Naive thymus-derived CD4-positive, alpha-beta T cell (primary cell): ENCODE measurements at regions of chr19 and their contacts with region 1.

Region 1: DNA sequence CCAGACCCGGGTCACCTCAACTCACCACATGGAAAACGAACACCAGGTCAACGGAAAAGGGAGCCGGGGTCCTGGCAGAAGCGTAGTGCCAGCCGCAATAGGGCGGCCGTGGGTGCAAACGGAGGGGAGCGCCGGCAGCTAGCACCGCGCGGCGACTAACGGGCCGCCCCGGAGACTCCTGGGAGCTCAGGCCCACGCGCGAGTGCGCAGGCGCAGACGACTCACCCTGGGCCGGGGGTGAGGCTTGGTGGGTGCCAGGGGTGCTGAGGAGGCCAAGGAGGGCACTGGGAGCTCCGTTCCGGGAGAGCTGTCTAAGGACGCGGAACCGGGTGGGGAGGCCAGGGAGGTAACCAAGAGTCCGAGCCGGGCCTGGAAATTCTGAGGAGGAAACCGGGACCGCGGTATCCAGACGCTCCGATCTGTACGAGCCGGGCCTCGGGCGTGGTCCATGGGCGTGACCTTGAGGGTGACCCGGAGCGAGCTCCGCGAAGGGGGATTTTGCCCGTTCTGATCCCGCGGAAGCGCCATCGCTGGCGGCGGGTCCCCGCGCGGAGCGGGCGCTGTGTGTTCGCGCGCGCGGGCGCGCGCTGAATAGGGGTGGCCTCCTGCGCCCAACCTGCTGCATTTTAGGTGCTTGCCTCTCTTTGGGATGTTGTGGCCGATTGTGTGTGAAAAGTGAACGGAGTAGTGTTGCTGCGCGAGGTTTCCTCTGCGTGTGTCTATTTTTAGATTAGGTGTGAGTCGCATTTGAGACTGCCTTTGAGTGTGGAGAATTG is at the start of gene ZNF382:
- DNase-seq: peak; percentile 77 to 92 (median 86)
- ATAC-seq: peak; percentile 80
- H3K4me3 ChIP-seq: peak within 1 kb of the TSS; percentile 95
- H3K4me3 Mint-ChIP-seq: peak within 1 kb of the TSS; percentile 81 to 99 (median 93)
- H3K27ac ChIP-seq: peak within 1 kb of the TSS; percentile 84
- H3K27ac Mint-ChIP-seq: peak within 1 kb of the TSS; percentile 78 to 98 (median 93)
- H3K4me1 ChIP-seq: peaks cover 7 to 15% of the 10 kb centered on the region in 2 donors
- H3K4me1 Mint-ChIP-seq: peaks cover 20 to 32% (median 27%) of the 10 kb centered on the region in 7 donors
- H3K27me3 ChIP-seq: no peaks in the 10 kb centered on the region
- H3K27me3 Mint-ChIP-seq: no peaks in the 10 kb centered on the region
- total RNA-seq, gene ZNF382: 5.4 to 20.2 (median 12.2) TPM

Region 2: GRCh38 chr19:34999498-35000341 is 1605.6 kb before region 1 on chr19 and contains the start of gene GRAMD1A:
- CTCF ChIA-PET with region 1: no interaction called
- POLR2A ChIA-PET with region 1: no interaction called
- intact Hi-C with region 1: no loop called
- DNase-seq: peak; percentile 48 to 86 (median 63)
- ATAC-seq: peak; percentile 74
- H3K4me3 ChIP-seq: peak within 1 kb of the TSS; percentile 72
- H3K4me3 Mint-ChIP-seq: peak within 1 kb of the TSS; percentile 94 to 100 (median 98)
- H3K27ac ChIP-seq: peak within 1 kb of the TSS; percentile 97
- H3K27ac Mint-ChIP-seq: peak within 1 kb of the TSS; percentile 95 to 100 (median 98)
- H3K4me1 ChIP-seq: peaks cover 66 to 72% of the 10 kb centered on the region in 2 donors
- H3K4me1 Mint-ChIP-seq: peaks cover 58 to 81% (median 73%) of the 10 kb centered on the region in 7 donors
- H3K27me3 ChIP-seq: no peaks in the 10 kb centered on the region
- H3K27me3 Mint-ChIP-seq: no peaks in the 10 kb centered on the region
- total RNA-seq, gene GRAMD1A: 90.1 to 286 (median 253) TPM

Region 3: DNA sequence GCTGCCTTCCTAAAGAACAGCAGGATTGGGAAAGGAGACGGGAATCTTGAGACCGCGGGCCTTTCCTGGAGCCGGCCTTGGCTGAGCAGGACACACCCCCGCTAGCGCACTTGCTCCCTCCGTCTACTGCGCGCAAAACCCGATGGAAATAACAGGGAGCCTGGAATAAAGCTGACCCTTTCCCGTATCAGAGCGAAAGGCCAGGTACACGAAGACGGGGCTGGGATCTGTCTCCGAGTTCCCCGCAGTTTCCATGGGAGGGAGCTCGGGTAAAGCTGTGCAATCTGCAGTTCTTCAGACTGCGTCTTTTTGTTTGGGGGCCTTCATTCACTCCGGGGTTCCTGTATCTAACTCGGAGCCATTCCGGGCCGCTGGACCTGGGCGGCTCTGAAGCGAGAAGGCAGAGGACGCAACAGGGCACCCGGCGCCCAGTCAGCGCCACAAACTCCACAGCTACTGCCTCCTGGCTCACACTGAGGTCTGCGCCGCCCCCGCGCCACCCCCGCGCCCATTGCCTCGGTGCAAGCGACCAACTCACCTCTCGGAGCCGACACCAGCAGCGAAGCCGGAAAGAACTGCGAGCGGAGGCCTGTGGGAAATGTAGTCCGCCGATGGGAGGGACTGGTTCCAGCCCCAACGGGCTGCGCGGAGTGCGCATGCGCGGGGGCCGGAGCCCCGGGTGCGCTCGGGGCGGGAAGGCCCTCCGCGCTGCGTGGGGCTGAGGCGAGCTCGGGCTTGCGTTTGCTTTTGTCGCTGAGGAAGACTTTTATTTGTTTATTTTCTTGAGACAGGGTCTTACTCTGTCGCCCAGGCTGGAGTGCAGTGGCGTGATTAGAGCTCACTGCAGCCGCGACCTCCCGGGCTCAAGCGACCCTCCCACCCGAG is 226.4 kb before region 1 on chr19 and contains the start of gene ZFP14:
- CTCF ChIA-PET with region 1: interaction called, 3 read pairs
- POLR2A ChIA-PET with region 1: no interaction called
- intact Hi-C with region 1: loop called in 1 of 2 experiments (anchors 1 kb)
- DNase-seq: peak; percentile 86 to 95 (median 93)
- ATAC-seq: peak; percentile 99
- H3K4me3 ChIP-seq: peak within 1 kb of the TSS; percentile 86
- H3K4me3 Mint-ChIP-seq: peak within 1 kb of the TSS; percentile 82 to 98 (median 94)
- H3K27ac ChIP-seq: peak within 1 kb of the TSS; percentile 86
- H3K27ac Mint-ChIP-seq: peak within 1 kb of the TSS; percentile 55 to 98 (median 94)
- H3K4me1 ChIP-seq: peaks cover 0 to 10% of the 10 kb centered on the region in 2 donors
- H3K4me1 Mint-ChIP-seq: peaks cover 9 to 23% (median 21%) of the 10 kb centered on the region in 7 donors
- H3K27me3 ChIP-seq: no peaks in the 10 kb centered on the region
- H3K27me3 Mint-ChIP-seq: no peaks in the 10 kb centered on the region
- total RNA-seq, gene ZFP14: 5.3 to 24.0 (median 9.2) TPM

Region 4: GRCh38 chr19:36449059-36449670 is 156.1 kb before region 1 on chr19:
- CTCF ChIA-PET with region 1: no interaction called
- POLR2A ChIA-PET with region 1: interaction called, 11 read pairs
- intact Hi-C with region 1: no loop called
- DNase-seq: no peak
- ATAC-seq: no peak
- H3K4me3 ChIP-seq: peak overlapping the region; percentile 18
- H3K4me3 Mint-ChIP-seq: no peak overlapping the region
- H3K27ac ChIP-seq: no peak overlapping the region
- H3K27ac Mint-ChIP-seq: no peak overlapping the region
- H3K4me1 ChIP-seq: no peaks in the 10 kb centered on the region
- H3K4me1 Mint-ChIP-seq: peaks cover 0 to 2% (median 0%) of the 10 kb centered on the region in 7 donors
- H3K27me3 ChIP-seq: no peaks in the 10 kb centered on the region
- H3K27me3 Mint-ChIP-seq: no peaks in the 10 kb centered on the region

Region 5: DNA sequence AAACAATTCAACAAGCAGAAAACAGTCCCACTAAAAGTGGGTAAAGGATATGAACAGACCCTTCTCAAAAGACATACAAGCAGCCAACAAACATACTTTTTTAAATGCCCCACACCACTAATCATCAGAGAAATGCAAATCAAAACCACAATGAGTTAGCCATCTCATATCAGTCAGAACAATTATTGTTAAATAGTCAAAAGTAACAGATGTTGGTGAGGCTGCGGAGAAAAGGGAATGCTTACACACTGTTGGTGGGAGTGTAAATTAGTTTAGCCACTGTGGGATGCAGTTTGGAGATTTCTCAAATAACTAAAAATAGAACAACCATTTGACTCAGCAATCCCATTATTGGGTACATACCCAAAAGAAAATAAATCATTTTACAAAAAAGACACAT is 40.9 kb before region 1 on chr19:
- CTCF ChIA-PET with region 1: no interaction called
- POLR2A ChIA-PET with region 1: no interaction called
- intact Hi-C with region 1: no loop called
- DNase-seq: no peak
- ATAC-seq: no peak
- H3K4me3 ChIP-seq: no peak overlapping the region
- H3K4me3 Mint-ChIP-seq: peak overlapping the region in 2 of 10 donors; percentile 7 to 60
- H3K27ac ChIP-seq: no peak overlapping the region
- H3K27ac Mint-ChIP-seq: no peak overlapping the region
- H3K4me1 ChIP-seq: no peaks in the 10 kb centered on the region
- H3K4me1 Mint-ChIP-seq: peaks cover 0 to 19% (median 15%) of the 10 kb centered on the region in 7 donors
- H3K27me3 ChIP-seq: no peaks in the 10 kb centered on the region
- H3K27me3 Mint-ChIP-seq: no peaks in the 10 kb centered on the region

Region 6: GRCh38 chr19:36665832-36666231 is 60.5 kb after region 1 on chr19:
- CTCF ChIA-PET with region 1: no interaction called
- POLR2A ChIA-PET with region 1: interaction called, 3 read pairs
- intact Hi-C with region 1: loop called (anchors 1 kb)
- DNase-seq: peak in 1 of 9 donors; percentile 2
- ATAC-seq: no peak
- H3K4me3 ChIP-seq: peak overlapping the region; percentile 88
- H3K4me3 Mint-ChIP-seq: peak overlapping the region; percentile 91 to 100 (median 98)
- H3K27ac ChIP-seq: no peak overlapping the region
- H3K27ac Mint-ChIP-seq: peak overlapping the region; percentile 29 to 99 (median 93)
- H3K4me1 ChIP-seq: peaks cover 0 to 10% of the 10 kb centered on the region in 2 donors
- H3K4me1 Mint-ChIP-seq: peaks cover 17 to 42% (median 35%) of the 10 kb centered on the region in 7 donors
- H3K27me3 ChIP-seq: no peaks in the 10 kb centered on the region
- H3K27me3 Mint-ChIP-seq: no peaks in the 10 kb centered on the region